ENCODE measurements at regions of chr1 and their contacts with region 1.

Region 1: GRCh38 chr1:233315718-233316301 is 11.7 kb upstream of the MAP3K21 start:
- DNase-seq: no peak
- H3K4me3 ChIP-seq: no peak overlapping the region
- H3K27ac ChIP-seq: no peak overlapping the region
- H3K27me3 ChIP-seq: peaks cover 6% of the 10 kb centered on the region
- CTCF ChIP-seq: no peak

Region 2: GRCh38 chr1:233211595-233211994 is 104.2 kb before region 1 on chr1:
- CTCF ChIA-PET with region 1: no interaction called
- POLR2A ChIA-PET with region 1: no interaction called
- DNase-seq: no peak
- H3K4me3 ChIP-seq: no peak overlapping the region
- H3K27ac ChIP-seq: no peak overlapping the region
- H3K27me3 ChIP-seq: no peaks in the 10 kb centered on the region
- CTCF ChIP-seq: no peak

Region 3: DNA sequence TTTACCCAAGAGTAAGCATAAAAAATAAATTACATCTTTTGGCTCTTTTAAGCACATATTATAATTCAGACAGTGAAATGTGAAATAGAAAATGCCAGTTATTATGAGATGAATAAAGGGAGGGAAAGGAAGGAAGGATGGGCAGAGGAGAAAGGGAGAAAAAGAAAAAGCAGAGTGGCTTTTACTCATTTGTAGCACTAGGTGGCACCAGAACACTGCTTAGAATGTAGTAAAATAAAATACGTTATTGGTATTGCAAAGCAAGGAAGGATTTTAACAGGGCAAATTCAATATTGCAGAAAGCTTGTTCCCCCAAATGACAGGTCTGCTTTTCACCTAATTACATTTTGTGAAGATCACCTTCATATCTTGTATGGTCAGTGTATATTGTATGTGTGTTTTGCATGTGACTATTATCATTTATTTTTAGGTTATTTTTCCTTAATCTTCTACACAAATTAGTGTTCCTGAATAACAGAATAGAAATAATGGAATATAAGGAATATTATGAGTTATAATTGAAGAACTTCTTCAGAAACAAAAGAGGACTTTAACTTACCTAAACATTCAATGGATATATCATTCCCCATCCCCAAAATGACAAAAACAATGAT is 11.2 kb before region 1 on chr1:
- CTCF ChIA-PET with region 1: interaction called, 21 read pairs
- POLR2A ChIA-PET with region 1: no interaction called
- DNase-seq: no peak
- H3K4me3 ChIP-seq: no peak overlapping the region
- H3K27ac ChIP-seq: no peak overlapping the region
- H3K27me3 ChIP-seq: no peaks in the 10 kb centered on the region
- CTCF ChIP-seq: peak; percentile 83

Region 4: GRCh38 chr1:233341117-233341516 is 25.3 kb after region 1 on chr1:
- CTCF ChIA-PET with region 1: no interaction called
- POLR2A ChIA-PET with region 1: no interaction called
- DNase-seq: no peak
- H3K4me3 ChIP-seq: no peak overlapping the region
- H3K27ac ChIP-seq: no peak overlapping the region
- H3K27me3 ChIP-seq: no peaks in the 10 kb centered on the region
- CTCF ChIP-seq: no peak

Measured in AG04450 (cell line).